B cell (primary cell): ENCODE measurements at regions of chr20 and their contacts with region 1.

Region 1: DNA sequence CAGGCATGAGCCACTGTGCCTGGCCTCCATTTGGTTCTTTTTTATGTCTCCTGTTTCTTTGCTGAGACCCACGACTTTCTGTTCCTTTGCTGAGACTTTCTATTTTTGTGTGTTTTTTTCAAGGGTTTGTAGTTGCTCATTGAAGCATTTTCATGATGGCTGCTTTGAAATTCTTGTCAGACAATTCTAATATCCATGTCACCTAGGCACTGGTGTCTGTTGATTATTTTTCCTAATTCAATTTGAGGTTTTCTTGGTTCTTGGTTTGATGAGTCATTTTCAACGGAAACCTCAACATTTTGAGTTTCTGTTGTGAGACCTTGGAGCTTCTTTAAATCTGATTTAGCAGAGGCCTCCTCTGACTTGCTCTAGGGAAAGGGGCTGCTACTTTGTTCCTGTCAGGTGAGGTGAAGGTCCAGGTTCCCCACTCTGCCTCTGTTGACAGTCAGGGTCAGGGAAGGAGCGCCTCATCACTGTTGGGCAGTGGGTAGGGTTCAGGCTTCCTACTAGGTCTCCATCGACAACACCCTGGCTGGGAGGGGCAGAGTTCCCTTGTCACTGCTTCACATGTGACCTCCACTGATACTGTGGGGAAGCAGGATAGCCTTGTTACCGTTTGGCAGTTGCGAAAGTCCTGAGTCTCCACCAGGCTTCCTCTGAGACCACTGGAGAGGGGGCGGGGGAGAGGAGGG is 67.2 kb upstream of the RNF24 start:
- DNase-seq: peak; percentile 39
- ATAC-seq: peak; percentile 50
- H3K4me3 ChIP-seq: peak overlapping the region in 1 of 5 experiments; percentile 15
- H3K4me3 Mint-ChIP-seq: peak overlapping the region; percentile 70
- H3K27ac ChIP-seq: peak overlapping the region; percentile 3 to 11
- H3K27ac Mint-ChIP-seq: peak overlapping the region; percentile 74
- H3K4me1 ChIP-seq: peaks cover 17 to 23% of the 10 kb centered on the region in 2 donors
- H3K4me1 Mint-ChIP-seq: peaks cover 31% of the 10 kb centered on the region
- H3K27me3 ChIP-seq: no peaks in the 10 kb centered on the region
- H3K27me3 Mint-ChIP-seq: peaks cover 23% of the 10 kb centered on the region
- CTCF ChIP-seq: no peak

Region 2: DNA sequence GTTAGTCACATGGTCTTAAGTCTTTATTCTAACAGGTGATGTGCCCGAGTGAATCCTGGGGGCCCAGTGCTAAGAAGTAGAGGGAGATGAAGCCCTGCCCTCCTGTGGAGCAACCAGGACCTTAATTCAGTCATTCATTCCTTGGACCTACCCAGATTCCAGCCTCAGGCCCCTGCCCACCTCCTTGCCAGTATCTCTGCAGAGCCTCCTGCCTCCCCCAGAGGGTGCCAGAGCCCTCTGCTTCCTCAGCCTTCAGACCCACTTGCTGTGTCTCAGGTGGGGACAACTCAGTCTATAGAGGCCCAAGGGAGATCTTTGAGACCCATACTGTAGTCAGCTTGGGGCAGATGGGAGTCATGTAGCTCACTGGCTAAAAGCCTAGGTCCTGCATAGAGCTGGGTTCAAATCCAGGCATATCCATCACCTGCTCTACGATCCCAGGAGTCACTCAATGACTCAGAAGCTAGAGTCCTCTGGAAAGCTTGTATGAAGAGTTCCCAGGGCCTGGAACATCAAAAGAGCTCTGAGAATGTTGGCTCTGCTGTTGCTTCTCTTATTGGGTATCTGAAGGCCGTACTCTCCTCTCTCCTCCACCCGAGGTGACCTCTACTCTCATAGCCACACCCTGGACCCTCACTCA is 366.2 kb before region 1 on chr20:
- CTCF ChIA-PET with region 1: no interaction called
- POLR2A ChIA-PET with region 1: no interaction called
- intact Hi-C with region 1: loop called (anchors 1 kb)
- DNase-seq: peak; percentile 30
- ATAC-seq: no peak
- H3K4me3 ChIP-seq: no peak overlapping the region
- H3K4me3 Mint-ChIP-seq: no peak overlapping the region
- H3K27ac ChIP-seq: no peak overlapping the region
- H3K27ac Mint-ChIP-seq: no peak overlapping the region
- H3K4me1 ChIP-seq: no peaks in the 10 kb centered on the region
- H3K4me1 Mint-ChIP-seq: no peaks in the 10 kb centered on the region
- H3K27me3 ChIP-seq: peaks cover 0 to 4% (median 0%) of the 10 kb centered on the region in 4 experiments
- H3K27me3 Mint-ChIP-seq: peaks cover 35% of the 10 kb centered on the region
- CTCF ChIP-seq: peak; percentile 45

Region 3: DNA sequence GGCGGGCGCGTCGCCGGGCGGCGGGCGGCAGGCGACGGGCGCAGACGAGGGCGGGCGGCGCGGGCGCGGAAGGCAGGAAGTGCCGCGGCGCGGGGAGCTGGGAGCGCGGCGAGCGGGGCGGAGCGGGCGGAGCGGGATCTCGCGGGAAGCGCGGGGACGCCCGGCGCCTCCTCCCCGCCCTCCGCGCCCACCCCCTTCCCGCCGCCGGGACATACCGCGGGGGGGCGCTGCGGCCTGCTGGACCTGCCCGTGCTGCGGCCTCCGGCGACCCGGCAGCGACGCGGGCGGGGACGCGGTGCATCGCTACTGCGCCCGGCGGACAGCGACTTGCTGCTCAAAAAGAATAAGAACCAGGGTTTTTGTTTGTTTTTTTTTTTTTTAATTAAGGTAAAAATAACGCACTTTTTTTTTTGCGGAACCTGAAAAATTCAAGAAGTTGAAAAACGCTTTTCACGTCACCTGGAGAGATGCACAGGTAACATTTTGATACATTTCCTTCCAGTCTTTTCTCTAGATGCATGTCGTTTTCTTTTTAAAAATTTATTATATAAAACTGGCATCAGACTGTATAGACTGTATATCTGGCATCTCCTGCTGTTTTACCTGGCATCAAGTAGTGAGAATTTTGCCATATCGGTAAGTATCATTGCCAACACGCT is 295.8 kb before region 1 on chr20 and contains the start of gene CENPB:
- CTCF ChIA-PET with region 1: interaction called, 10 read pairs
- POLR2A ChIA-PET with region 1: no interaction called
- intact Hi-C with region 1: loop called (anchors 2 kb)
- DNase-seq: peak; percentile 91
- ATAC-seq: peak; percentile 96
- H3K4me3 ChIP-seq: peak within 1 kb of the TSS; percentile 46 to 62 (median 59)
- H3K4me3 Mint-ChIP-seq: peak within 1 kb of the TSS; percentile 89
- H3K27ac ChIP-seq: peak within 1 kb of the TSS; percentile 16 to 56
- H3K27ac Mint-ChIP-seq: peak within 1 kb of the TSS; percentile 88
- H3K4me1 ChIP-seq: peaks cover 8 to 18% of the 10 kb centered on the region in 2 donors
- H3K4me1 Mint-ChIP-seq: peaks cover 30% of the 10 kb centered on the region
- H3K27me3 ChIP-seq: no peaks in the 10 kb centered on the region
- H3K27me3 Mint-ChIP-seq: no peaks in the 10 kb centered on the region
- CTCF ChIP-seq: peak; percentile 88
- total RNA-seq, gene CENPB: 43.7 and 46.4 TPM in 2 replicates

Region 4: GRCh38 chr20:3888622-3889488 is 193.7 kb before region 1 on chr20 and contains the start of gene PANK2:
- CTCF ChIA-PET with region 1: interaction called, 13 read pairs
- POLR2A ChIA-PET with region 1: no interaction called
- intact Hi-C with region 1: loop called (anchors 1 kb)
- DNase-seq: peak; percentile 97
- ATAC-seq: peak; percentile 96
- H3K4me3 ChIP-seq: peak within 1 kb of the TSS; percentile 70 to 90 (median 86)
- H3K4me3 Mint-ChIP-seq: peak within 1 kb of the TSS; percentile 97
- H3K27ac ChIP-seq: peak within 1 kb of the TSS; percentile 72 to 90
- H3K27ac Mint-ChIP-seq: peak within 1 kb of the TSS; percentile 97
- H3K4me1 ChIP-seq: peaks cover 44 to 50% of the 10 kb centered on the region in 2 donors
- H3K4me1 Mint-ChIP-seq: peaks cover 54% of the 10 kb centered on the region
- H3K27me3 ChIP-seq: no peaks in the 10 kb centered on the region
- H3K27me3 Mint-ChIP-seq: no peaks in the 10 kb centered on the region
- CTCF ChIP-seq: peak; percentile 19
- total RNA-seq, gene PANK2: 63.3 and 70.6 TPM in 2 replicates

Region 5: DNA sequence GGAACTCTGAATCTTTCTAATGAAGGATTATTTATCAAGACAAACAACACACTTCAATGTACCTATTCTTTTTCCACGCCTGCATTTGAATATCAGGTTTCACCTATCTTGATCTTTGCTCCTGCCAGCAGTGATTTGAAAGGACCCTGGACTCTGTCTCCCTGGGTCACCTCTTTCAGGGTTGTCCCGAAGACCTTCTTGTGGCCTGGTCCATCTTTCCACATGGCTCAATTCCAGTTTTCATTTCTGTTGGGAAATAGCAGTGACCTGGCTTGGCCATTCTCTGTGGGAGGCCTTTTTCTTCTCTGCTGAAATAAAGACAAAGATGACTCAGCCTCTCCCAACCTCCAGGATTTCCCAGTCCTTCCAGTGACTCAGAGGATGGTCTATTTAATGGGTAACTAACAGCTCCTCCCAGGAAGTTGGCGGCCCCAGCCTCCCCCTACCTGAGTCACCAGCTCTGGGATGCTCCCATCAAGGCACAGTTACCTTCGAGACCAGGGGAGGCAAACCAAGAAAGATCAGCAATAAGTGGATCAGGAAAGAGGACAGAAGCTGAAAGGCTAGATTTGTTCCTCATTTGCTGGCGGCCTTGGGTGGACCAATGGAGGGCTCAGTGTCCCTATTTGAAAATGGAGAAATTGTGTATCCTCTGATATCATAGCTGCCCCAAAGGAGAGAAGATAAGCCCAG is 53.0 kb after region 1 on chr20:
- CTCF ChIA-PET with region 1: no interaction called
- POLR2A ChIA-PET with region 1: no interaction called
- intact Hi-C with region 1: no loop called
- DNase-seq: no peak
- ATAC-seq: no peak
- H3K4me3 ChIP-seq: no peak overlapping the region
- H3K4me3 Mint-ChIP-seq: no peak overlapping the region
- H3K27ac ChIP-seq: no peak overlapping the region
- H3K27ac Mint-ChIP-seq: no peak overlapping the region
- H3K4me1 ChIP-seq: no peaks in the 10 kb centered on the region
- H3K4me1 Mint-ChIP-seq: no peaks in the 10 kb centered on the region
- H3K27me3 ChIP-seq: no peaks in the 10 kb centered on the region
- H3K27me3 Mint-ChIP-seq: peaks cover 17% of the 10 kb centered on the region
- CTCF ChIP-seq: no peak